ENCODE measurements at regions of chr9 and their contacts with region 1.

Region 1: GRCh38 chr9:121267689-121268597 is at the start of gene GSN:
- DNase-seq: peak; percentile 91 to 95
- ATAC-seq: peak; percentile 89
- H3K4me3 ChIP-seq: peak within 1 kb of the TSS; percentile 83 to 99
- H3K27ac ChIP-seq: peak within 1 kb of the TSS; percentile 83 to 97
- H3K4me1 ChIP-seq: peaks cover 0 to 2% of the 10 kb centered on the region in 2 donors
- H3K27me3 ChIP-seq: no peaks in the 10 kb centered on the region
- total RNA-seq, gene GSN: 922 to 2,469 TPM

Region 2: DNA sequence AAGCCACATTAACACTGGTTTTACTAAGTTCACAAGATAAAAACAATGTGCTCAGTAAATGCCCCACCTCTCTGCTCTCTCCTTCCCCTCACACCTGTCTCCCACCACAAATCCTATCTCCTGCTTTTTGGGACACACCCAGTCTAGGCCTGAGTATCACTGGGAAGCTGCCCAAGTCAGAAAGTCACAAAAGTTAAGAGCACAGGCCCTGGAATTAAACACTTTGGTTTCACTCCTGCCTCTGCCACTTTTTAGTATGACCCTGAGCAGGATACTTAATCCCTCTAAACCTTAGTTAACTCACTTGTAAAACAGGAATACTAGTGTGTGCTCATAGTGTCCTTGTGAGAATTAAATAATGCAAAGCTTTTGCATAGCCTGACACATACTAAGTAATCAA is 229.1 kb before region 1 on chr9:
- intact Hi-C with region 1: no loop called
- DNase-seq: no peak
- ATAC-seq: no peak
- H3K4me3 ChIP-seq: no peak overlapping the region
- H3K27ac ChIP-seq: no peak overlapping the region
- H3K4me1 ChIP-seq: no peaks in the 10 kb centered on the region
- H3K27me3 ChIP-seq: no peaks in the 10 kb centered on the region

Region 3: GRCh38 chr9:121222524-121223171 is 45.3 kb before region 1 on chr9:
- intact Hi-C with region 1: no loop called
- DNase-seq: no peak
- ATAC-seq: no peak
- H3K4me3 ChIP-seq: no peak overlapping the region
- H3K27ac ChIP-seq: no peak overlapping the region
- H3K4me1 ChIP-seq: no peaks in the 10 kb centered on the region
- H3K27me3 ChIP-seq: no peaks in the 10 kb centered on the region

Region 4: GRCh38 chr9:121278535-121279261 is 10.8 kb after region 1 on chr9:
- intact Hi-C with region 1: loop called in 1 of 2 experiments (anchors 1 kb)
- DNase-seq: peak in 1 of 2 donors; percentile 80
- ATAC-seq: peak; percentile 85
- H3K4me3 ChIP-seq: no peak overlapping the region
- H3K27ac ChIP-seq: peak overlapping the region; percentile 81 to 98
- H3K4me1 ChIP-seq: peaks cover 20 to 25% of the 10 kb centered on the region in 2 donors
- H3K27me3 ChIP-seq: no peaks in the 10 kb centered on the region

Region 5: GRCh38 chr9:121369595-121370265 is 101.8 kb after region 1 on chr9 and contains the start of gene STOM:
- intact Hi-C with region 1: loop called (anchors 2 to 5 kb)
- DNase-seq: peak; percentile 92 to 96
- ATAC-seq: peak; percentile 89
- H3K4me3 ChIP-seq: peak within 1 kb of the TSS; percentile 48 to 84
- H3K27ac ChIP-seq: peak within 1 kb of the TSS; percentile 62 to 78
- H3K4me1 ChIP-seq: peaks cover 0 to 6% of the 10 kb centered on the region in 2 donors
- H3K27me3 ChIP-seq: no peaks in the 10 kb centered on the region
- total RNA-seq, gene STOM: 375 to 384 TPM

Measured in aorta (tissue), 5 donors.